WTC11 (cell line): ENCODE measurements at regions of chr5 and their contacts with region 1.

Region 1: DNA sequence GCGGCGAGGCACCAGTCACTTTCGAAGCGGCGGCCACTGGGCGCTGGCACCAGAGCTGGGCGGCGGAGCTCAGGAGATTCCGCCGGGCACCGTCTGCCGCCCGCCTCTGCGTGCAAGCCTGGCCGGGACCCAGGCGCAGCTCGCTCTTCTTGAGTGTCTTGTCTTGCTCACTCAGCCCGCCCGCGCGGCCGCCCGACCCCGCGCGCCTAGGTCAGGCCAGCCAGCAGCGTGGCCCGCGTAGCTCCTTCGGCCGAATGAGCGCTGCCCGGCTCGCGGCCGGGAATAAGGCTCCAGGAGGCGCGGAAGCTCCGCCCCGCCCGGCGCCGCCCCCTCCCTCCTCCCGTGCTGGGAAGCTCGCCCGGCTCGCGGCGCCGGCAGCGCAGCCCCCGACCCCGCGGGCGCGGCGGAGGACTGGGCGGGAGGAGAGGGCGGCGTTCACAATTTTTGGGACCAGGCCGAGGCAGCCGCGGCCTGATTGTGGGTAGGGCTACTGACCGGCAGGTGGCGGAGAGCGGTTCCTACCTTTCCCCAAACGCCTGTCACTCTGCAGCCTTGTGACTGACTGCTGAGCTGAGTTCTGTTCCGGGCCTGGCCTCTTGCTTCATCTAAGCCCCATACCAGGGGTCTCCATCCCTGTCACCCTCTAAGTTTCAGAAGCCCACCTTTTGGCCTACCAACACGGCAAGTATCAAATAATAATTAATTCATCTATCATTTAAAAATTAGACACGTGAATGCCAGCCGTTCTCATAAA is at the start of gene HBEGF:
- DNase-seq: peak; percentile 93
- ATAC-seq: peak; percentile 86
- H3K4me3 Mint-ChIP-seq: peak within 1 kb of the TSS; percentile 68
- H3K27ac Mint-ChIP-seq: no peak within 1 kb of the TSS
- H3K4me1 Mint-ChIP-seq: peaks cover 27% of the 10 kb centered on the region
- H3K27me3 Mint-ChIP-seq: peaks cover 11% of the 10 kb centered on the region
- CTCF ChIP-seq: peak; percentile 11; the same call in 1 of the 2 replicates
- total RNA-seq, gene HBEGF: 2.2 to 4.0 TPM (median 2.5 TPM) in 3 replicates

Region 2: GRCh38 chr5:140251527-140251973 is 95.0 kb before region 1 on chr5:
- CTCF ChIA-PET with region 1: interaction called, 621 read pairs
- POLR2A ChIA-PET with region 1: interaction called, 28 read pairs
- DNase-seq: no peak
- ATAC-seq: no peak
- H3K4me3 Mint-ChIP-seq: no peak overlapping the region
- H3K27ac Mint-ChIP-seq: no peak overlapping the region
- H3K4me1 Mint-ChIP-seq: peaks cover 13% of the 10 kb centered on the region
- H3K27me3 Mint-ChIP-seq: no peaks in the 10 kb centered on the region
- CTCF ChIP-seq: no peak

Region 3: DNA sequence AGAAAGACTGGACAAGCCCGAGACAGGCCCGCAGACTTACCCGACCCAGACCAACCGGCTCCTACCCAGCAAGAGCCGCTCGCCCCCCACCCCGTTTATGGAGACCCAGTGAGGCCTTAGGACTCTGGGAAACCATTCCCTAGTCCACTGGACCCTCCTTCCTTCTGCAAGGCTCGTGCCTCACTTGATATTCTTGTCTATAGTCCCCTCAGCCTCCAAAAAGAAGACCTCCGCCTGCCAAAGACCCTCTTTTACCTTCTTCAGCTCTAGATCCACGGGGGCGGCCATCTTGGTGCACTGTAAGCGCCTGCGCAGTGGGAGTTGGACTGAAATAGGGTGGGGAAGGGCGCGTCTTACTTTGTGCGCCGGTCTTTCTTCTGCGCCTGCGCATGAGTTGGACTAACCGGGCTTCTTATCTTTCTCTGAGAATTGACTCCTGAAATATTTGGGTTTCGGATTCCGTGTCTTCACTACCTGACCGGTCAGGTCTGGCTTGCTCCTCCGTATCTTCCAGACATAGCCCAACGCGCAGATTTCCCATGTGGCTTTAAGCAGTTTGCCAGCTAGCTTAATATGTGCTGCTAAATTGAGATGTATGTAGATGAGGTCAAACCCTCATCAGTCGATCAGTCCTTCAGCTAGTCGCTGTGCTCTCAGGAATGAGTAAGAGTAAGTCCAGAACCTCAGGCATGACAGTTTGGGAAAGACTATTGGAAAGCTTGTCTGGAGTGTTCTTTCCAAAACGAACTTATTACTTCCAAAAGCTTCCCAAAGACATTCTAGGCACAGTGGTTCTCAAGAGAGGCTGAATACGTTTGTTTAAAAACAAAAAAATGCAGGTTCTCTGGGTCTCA is 43.5 kb before region 1 on chr5 and contains the start of gene PFDN1:
- CTCF ChIA-PET with region 1: interaction called, 23 read pairs
- POLR2A ChIA-PET with region 1: interaction called, 14 read pairs
- DNase-seq: peak; percentile 94
- ATAC-seq: peak; percentile 97
- H3K4me3 Mint-ChIP-seq: peak within 1 kb of the TSS; percentile 96
- H3K27ac Mint-ChIP-seq: peak within 1 kb of the TSS; percentile 99
- H3K4me1 Mint-ChIP-seq: peaks cover 8% of the 10 kb centered on the region
- H3K27me3 Mint-ChIP-seq: peaks cover 6% of the 10 kb centered on the region; the same call in 1 of the 2 replicates
- CTCF ChIP-seq: no peak
- total RNA-seq, gene PFDN1: 44.1 to 46.4 TPM (median 46.2 TPM) in 3 replicates

Region 4: DNA sequence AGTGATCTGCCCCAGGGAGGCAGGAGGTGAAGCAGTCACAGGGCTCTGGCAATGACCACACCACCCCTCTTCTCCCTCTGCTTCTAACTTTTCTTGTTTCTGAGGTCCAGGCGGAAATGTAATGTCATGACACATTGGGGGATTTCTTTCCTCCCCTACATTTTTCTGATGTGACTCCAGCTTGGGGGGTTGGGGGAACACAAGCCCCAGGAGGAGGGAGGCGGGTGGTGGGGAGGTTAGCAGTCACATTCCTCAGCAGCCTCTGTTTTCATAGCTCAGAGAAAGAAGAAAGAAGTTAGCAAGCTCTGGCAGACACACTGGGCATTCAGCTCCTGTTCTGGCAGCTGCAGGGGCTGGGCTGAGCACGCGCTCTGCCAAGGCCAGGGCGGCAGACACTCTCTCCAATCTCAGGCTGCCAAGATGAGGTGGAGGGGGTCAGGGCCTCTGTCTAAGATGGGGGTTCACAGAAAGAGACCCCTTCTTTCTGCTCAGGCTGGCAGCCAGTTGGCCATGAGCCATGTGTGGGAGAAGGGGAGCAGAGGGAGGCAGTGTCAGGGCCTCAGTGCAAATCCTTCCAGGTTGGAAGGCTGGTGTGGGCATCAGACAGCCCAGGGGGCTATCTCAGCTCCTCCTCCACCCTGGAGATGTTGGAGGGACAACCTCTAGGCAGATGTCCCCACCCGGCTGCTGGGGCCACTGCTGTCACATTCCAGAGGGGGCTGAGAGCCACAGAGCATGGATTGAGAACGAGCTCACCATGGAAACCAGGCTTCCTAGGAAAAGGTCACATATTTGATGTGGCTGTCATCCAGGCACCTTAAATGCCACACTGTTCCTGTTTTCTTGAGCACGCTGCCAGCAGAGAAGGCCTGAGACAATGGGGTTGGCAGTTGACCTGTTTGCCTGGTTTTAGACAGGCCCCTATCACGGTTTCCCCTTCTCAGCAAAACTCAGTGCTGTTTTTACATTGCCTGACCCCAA is 23.5 kb before region 1 on chr5:
- CTCF ChIA-PET with region 1: interaction called, 79 read pairs
- POLR2A ChIA-PET with region 1: interaction called, 7 read pairs
- DNase-seq: no peak
- ATAC-seq: no peak
- H3K4me3 Mint-ChIP-seq: no peak overlapping the region
- H3K27ac Mint-ChIP-seq: no peak overlapping the region
- H3K4me1 Mint-ChIP-seq: peaks cover 12% of the 10 kb centered on the region
- H3K27me3 Mint-ChIP-seq: peaks cover 3% of the 10 kb centered on the region
- CTCF ChIP-seq: no peak

Region 5: GRCh38 chr5:140357726-140358093 is 11.2 kb after region 1 on chr5:
- CTCF ChIA-PET with region 1: interaction called, 90 read pairs
- POLR2A ChIA-PET with region 1: interaction called, 11 read pairs
- DNase-seq: peak; percentile 87
- ATAC-seq: peak; percentile 93
- H3K4me3 Mint-ChIP-seq: peak overlapping the region; percentile 61
- H3K27ac Mint-ChIP-seq: peak overlapping the region; percentile 95
- H3K4me1 Mint-ChIP-seq: peaks cover 10% of the 10 kb centered on the region
- H3K27me3 Mint-ChIP-seq: peaks cover 8% of the 10 kb centered on the region; the same call in 1 of the 2 replicates
- CTCF ChIP-seq: peak; percentile 69

Region 6: DNA sequence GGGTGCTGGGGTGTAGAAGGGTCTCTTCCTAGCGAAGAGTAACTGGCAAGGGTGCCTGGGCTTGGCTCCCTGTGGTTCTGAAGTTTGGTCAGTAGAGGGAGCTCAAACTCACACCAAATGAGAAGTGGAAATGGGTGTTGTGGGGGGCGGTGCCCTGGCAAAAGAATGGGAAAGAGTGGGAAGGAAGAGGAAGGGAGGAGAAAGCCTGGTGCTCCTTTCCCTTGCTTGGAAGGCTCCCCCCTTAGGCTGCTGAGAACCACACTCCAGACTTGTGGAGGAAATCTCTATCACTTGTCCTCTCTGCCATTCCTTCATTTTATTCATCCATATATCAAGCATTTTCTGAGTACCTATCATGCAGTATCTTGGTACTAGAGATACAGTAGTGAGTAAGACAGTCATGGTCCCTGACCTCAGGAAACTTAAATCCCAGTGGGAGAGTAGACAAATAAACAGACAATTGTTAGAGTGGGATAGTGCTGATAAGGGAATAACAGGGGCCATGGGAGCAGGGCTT is 26.5 kb after region 1 on chr5:
- CTCF ChIA-PET with region 1: interaction called, 25 read pairs
- POLR2A ChIA-PET with region 1: interaction called, 4 read pairs
- DNase-seq: peak; percentile 88
- ATAC-seq: peak; percentile 97
- H3K4me3 Mint-ChIP-seq: no peak overlapping the region
- H3K27ac Mint-ChIP-seq: peak overlapping the region; percentile 62
- H3K4me1 Mint-ChIP-seq: peaks cover 4% of the 10 kb centered on the region
- H3K27me3 Mint-ChIP-seq: no peaks in the 10 kb centered on the region; the same call in 1 of the 2 replicates
- CTCF ChIP-seq: peak; percentile 66

Region 7: GRCh38 chr5:140481758-140482157 is 135.2 kb after region 1 on chr5:
- CTCF ChIA-PET with region 1: no interaction called
- POLR2A ChIA-PET with region 1: no interaction called
- DNase-seq: no peak
- ATAC-seq: no peak
- H3K4me3 Mint-ChIP-seq: no peak overlapping the region
- H3K27ac Mint-ChIP-seq: no peak overlapping the region
- H3K4me1 Mint-ChIP-seq: peaks cover 8% of the 10 kb centered on the region
- H3K27me3 Mint-ChIP-seq: no peaks in the 10 kb centered on the region
- CTCF ChIP-seq: no peak